ENCODE measurements at regions of chr2 and their contacts with region 1.

Region 1: DNA sequence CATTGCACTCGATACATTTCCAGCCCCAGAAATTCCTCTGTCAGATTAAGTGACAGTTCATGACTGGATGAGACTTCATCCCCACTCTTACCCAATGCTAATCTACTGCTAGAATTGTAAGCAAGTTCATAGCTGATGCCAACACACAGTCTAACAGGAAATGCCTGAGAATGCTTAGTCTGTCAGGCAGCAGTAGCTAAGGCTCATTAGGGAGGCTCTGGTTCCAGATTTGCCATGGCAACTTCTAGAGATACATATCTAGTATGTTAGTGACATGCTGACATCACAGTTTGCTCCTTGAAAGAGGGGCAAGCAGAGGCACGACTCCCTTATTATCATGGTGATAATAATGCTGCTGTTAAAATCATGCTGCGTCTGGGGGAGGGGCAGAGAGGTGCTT is 198.4 kb downstream of the RBM43 start:
- DNase-seq: peak; percentile 97
- H3K4me3 ChIP-seq: no peak overlapping the region
- H3K27ac ChIP-seq: peak overlapping the region; percentile 71
- H3K4me1 ChIP-seq: peaks cover 15% of the 10 kb centered on the region
- H3K27me3 ChIP-seq: no peaks in the 10 kb centered on the region
- CTCF ChIP-seq: no peak

Region 2: DNA sequence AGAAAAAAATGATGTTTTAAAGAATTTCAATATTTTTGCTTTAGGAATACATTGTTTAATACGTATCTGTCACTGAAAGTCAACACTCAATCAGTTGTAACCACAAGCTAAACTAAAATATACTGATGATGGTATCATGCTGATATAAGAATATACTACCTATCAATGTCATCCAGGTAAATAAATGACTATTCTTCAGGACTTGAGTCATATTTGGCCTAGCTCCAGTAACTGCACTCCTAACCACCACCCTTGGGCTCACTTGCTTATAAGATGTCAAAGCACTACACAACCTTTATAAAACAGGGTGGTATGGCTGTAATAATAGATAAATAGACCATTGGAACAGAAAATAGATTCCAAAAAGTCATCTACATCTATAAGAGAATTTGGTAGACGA is 624.6 kb before region 1 on chr2:
- CTCF ChIA-PET with region 1: no interaction called
- POLR2A ChIA-PET with region 1: no interaction called
- intact Hi-C with region 1: no loop called
- DNase-seq: no peak
- H3K4me3 ChIP-seq: no peak overlapping the region
- H3K27ac ChIP-seq: no peak overlapping the region
- H3K4me1 ChIP-seq: no peaks in the 10 kb centered on the region
- H3K27me3 ChIP-seq: no peaks in the 10 kb centered on the region
- CTCF ChIP-seq: no peak

Region 3: GRCh38 chr2:150624001-150624401 is 439.3 kb before region 1 on chr2:
- CTCF ChIA-PET with region 1: no interaction called
- POLR2A ChIA-PET with region 1: no interaction called
- intact Hi-C with region 1: loop called (anchors 10 kb)
- DNase-seq: peak; percentile 27
- H3K4me3 ChIP-seq: no peak overlapping the region
- H3K27ac ChIP-seq: no peak overlapping the region
- H3K4me1 ChIP-seq: no peaks in the 10 kb centered on the region
- H3K27me3 ChIP-seq: no peaks in the 10 kb centered on the region
- CTCF ChIP-seq: no peak

Region 4: DNA sequence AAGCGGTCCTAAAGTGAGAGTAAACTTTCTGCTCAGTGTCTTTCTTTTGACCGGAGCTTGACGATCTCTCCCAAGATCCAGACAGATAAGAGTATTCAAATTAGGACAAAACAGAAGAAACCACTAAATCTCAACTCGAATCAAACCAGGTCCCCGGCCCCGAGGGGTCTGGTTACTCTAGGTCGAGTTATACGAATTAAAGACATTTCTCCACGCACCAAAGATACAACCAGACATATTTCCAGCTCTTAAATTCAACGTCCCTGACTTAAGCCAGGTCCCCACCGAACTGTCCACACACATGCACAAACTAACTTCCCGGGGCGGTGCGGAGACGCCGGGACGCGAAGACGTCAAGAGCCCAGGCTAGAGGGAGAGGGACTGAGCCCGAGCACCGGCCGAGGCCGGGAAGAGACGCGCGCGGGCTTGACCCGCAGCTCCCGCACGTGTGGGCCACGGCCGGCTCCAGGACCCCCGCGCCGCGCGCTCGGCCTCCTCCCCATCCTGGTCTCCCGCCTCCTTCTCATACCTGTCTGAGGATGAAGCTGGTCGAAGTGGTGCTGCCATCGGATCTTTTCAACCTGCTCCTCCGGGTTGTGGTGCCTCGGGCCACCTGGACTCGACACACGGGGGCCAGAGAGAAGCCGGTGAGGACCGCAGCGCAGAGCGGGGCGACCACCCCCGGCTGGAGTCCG is 1034.7 kb after region 1 on chr2:
- CTCF ChIA-PET with region 1: no interaction called
- POLR2A ChIA-PET with region 1: no interaction called
- intact Hi-C with region 1: no loop called
- DNase-seq: peak; percentile 37
- H3K4me3 ChIP-seq: peak overlapping the region; percentile 52
- H3K27ac ChIP-seq: no peak overlapping the region
- H3K4me1 ChIP-seq: peaks cover 15% of the 10 kb centered on the region
- H3K27me3 ChIP-seq: peaks cover 71% of the 10 kb centered on the region
- CTCF ChIP-seq: no peak